WTC11 (cell line): ENCODE measurements at regions of chr10 and their contacts with region 1.

Region 1: GRCh38 chr10:102167861-102168260 is 15.7 kb downstream of the NOLC1 start:
- DNase-seq: no peak
- ATAC-seq: no peak
- H3K4me3 Mint-ChIP-seq: no peak overlapping the region
- H3K27ac Mint-ChIP-seq: no peak overlapping the region
- H3K4me1 Mint-ChIP-seq: peaks cover 8% of the 10 kb centered on the region
- H3K27me3 Mint-ChIP-seq: peaks cover 8% of the 10 kb centered on the region
- CTCF ChIP-seq: no peak

Region 2: DNA sequence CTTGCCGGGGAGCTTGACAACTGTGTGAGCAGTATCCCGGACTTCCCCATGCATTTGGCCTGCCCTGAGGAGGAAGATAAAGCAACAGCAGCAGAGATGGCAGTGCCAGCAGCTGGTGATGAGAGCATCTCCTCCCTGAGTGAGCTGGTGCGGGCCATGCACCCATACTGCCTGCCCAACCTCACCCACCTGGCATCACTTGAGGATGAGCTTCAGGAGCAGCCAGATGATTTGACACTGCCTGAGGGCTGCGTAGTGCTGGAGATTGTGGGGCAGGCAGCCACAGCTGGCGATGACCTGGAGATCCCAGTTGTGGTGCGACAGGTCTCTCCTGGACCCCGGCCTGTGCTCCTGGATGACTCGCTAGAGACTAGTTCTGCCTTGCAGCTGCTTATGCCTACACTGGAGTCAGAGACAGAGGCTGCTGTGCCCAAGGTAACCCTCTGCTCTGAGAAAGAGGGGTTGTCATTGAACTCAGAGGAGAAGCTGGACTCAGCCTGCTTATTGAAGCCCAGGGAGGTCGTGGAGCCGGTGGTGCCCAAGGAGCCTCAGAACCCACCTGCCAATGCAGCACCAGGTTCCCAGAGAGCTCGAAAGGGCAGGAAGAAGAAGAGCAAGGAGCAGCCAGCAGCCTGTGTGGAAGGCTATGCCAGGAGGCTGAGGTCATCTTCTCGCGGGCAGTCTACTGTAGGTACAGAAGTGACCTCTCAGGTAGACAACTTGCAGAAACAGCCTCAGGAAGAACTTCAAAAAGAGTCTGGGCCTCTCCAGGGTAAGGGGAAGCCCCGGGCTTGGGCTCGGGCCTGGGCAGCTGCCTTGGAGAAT is 28.4 kb before region 1 on chr10:
- CTCF ChIA-PET with region 1: interaction called, 10 read pairs
- POLR2A ChIA-PET with region 1: no interaction called
- DNase-seq: no peak
- ATAC-seq: no peak
- H3K4me3 Mint-ChIP-seq: no peak overlapping the region
- H3K27ac Mint-ChIP-seq: no peak overlapping the region
- H3K4me1 Mint-ChIP-seq: peaks cover 16% of the 10 kb centered on the region
- H3K27me3 Mint-ChIP-seq: no peaks in the 10 kb centered on the region
- CTCF ChIP-seq: no peak

Region 3: DNA sequence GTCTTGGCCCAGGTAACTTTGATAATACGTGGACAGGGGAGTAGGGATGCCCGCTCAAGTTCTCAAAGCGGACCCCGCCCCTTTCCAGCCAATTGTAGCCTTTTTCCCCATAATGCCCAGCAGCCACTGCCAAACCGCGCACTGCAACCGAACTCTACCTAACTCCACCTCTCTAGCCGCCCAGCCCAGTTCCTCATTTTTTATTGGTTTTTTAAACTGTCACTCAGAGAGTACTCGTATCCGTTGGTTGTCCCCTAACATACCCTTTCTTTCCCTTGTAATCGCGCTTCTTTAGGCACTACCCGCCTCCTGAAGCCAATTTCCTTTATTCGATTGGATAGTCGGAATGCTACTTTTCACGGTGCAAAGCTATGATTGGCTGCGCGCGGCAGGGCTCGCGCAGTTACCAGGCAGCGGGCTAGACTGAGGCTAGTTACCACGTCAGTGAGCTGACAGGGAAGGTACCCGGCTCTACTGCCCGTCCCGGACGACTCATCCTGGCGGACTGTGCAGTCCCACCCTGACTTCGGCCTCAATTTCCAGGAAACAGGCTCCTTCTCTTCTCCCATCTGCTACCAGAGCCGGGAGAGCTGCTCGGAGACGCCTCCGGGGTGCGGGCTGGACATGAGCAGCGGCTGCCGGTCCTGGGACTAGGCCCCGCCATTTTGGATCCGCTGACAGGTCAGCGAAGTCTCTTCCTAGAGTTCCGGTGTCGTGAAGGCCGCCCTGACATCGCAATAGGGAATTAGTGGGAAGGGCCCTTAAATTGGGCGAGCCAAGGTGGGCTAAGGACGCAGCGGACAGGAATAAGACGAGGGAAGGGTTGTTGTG is 77.5 kb after region 1 on chr10 and contains the start of gene GBF1:
- CTCF ChIA-PET with region 1: interaction called, 14 read pairs
- POLR2A ChIA-PET with region 1: interaction called, 8 read pairs
- DNase-seq: peak; percentile 90
- ATAC-seq: peak; percentile 93
- H3K4me3 Mint-ChIP-seq: peak within 1 kb of the TSS; percentile 100
- H3K27ac Mint-ChIP-seq: peak within 1 kb of the TSS; percentile 96
- H3K4me1 Mint-ChIP-seq: peaks cover 38% of the 10 kb centered on the region
- H3K27me3 Mint-ChIP-seq: peaks cover 45% of the 10 kb centered on the region
- CTCF ChIP-seq: no peak
- total RNA-seq, gene GBF1: 29.8 to 32.4 TPM (median 32.1 TPM) in 3 replicates

Region 4: DNA sequence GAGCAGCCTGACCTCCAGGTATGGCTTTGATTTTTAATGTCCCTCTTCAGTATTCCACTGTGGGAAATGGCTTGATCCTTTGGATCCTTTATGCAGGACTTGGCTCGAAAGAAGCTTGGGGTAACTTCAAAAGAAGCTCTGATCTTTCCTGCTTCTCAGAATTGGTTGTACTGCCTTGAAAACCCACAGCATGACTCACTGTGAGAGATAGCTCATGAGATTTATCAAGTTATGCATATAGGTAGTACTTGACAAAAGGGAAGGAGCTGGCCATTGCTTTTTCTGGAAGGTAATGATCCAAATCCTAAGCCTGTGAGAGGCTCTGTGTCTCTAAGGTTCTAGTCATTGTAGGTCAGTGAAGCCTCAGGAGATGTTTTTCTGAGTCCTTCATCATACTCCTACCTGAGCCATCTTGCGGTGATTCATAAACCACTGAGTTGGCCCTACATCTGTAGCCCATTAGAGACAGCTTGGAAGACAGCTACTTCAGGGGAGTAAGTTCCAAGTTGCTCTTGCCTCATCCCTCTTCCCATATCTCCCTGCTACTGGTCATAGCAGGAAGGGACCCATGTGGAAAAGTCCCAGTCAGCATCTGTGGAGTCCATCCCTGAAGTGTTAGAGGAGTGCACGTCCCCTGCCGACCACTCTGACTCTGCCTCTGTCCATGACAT is 191.0 kb after region 1 on chr10:
- CTCF ChIA-PET with region 1: interaction called, 12 read pairs
- POLR2A ChIA-PET with region 1: no interaction called
- DNase-seq: no peak
- ATAC-seq: no peak
- H3K4me3 Mint-ChIP-seq: no peak overlapping the region
- H3K27ac Mint-ChIP-seq: no peak overlapping the region
- H3K4me1 Mint-ChIP-seq: no peaks in the 10 kb centered on the region
- H3K27me3 Mint-ChIP-seq: no peaks in the 10 kb centered on the region
- CTCF ChIP-seq: no peak

Region 5: GRCh38 chr10:102394079-102394800 is 226.4 kb after region 1 on chr10:
- CTCF ChIA-PET with region 1: interaction called, 14 read pairs
- POLR2A ChIA-PET with region 1: no interaction called
- DNase-seq: peak; percentile 93
- ATAC-seq: peak; percentile 81
- H3K4me3 Mint-ChIP-seq: peak overlapping the region; percentile 75
- H3K27ac Mint-ChIP-seq: peak overlapping the region; percentile 12; the same call in 1 of the 2 replicates
- H3K4me1 Mint-ChIP-seq: peaks cover 18% of the 10 kb centered on the region
- H3K27me3 Mint-ChIP-seq: peaks cover 41% of the 10 kb centered on the region
- CTCF ChIP-seq: no peak; the same call in none of the 2 replicates